Activated CD8-positive, alpha-beta memory T cell treated with anti-CD3 and anti-CD28 coated beads, Interleukin-2, amount 10 ng/mL, durations not matched to agents 7 days and 5 days (primary cell): ENCODE measurements at regions of chr20 and their contacts with region 1.

Region 1: GRCh38 chr20:62937366-62938104 is 412 bp upstream of the GID8 start:
- DNase-seq: peak; percentile 98
- ATAC-seq: peak; percentile 88
- H3K4me3 Mint-ChIP-seq: no peak overlapping the region
- H3K27ac Mint-ChIP-seq: peak overlapping the region; percentile 95
- H3K4me1 Mint-ChIP-seq: peaks cover 44% of the 10 kb centered on the region
- H3K27me3 Mint-ChIP-seq: no peaks in the 10 kb centered on the region

Region 2: DNA sequence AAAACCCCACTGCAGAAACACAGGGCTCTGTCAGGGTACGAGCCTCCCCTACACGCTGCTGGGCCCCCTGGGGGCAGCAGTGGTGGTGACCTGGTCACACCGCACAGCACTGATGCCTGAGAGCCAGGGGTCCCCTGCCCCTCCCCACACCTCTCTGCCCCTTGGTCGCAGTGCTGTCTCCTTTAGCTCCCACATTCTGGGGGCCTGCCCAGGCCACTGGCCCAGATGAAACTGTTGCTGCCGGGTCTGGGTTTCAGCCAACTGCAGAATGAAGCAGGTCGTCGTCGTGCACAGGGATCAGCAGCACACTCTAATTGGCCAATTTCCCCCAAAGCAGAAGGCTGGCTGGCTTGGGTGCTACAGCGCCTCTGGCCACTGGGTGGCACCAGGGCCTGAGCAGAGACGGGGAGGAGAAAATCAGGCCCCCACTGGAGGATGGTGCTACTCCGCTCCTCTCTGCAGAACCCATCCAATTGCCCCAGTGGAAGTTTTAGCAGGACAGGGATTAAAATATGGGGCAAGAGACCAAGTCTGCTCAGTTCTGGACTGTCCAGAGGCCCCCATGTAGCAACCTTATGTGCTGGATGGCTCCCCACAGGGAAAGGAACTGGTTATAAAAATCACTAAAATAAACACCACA is 37.4 kb before region 1 on chr20:
- CTCF ChIA-PET with region 1: interaction called, 10 read pairs
- DNase-seq: peak; percentile 88
- ATAC-seq: peak; percentile 93
- H3K4me3 Mint-ChIP-seq: peak overlapping the region; percentile 41
- H3K27ac Mint-ChIP-seq: peak overlapping the region; percentile 70
- H3K4me1 Mint-ChIP-seq: peaks cover 52% of the 10 kb centered on the region
- H3K27me3 Mint-ChIP-seq: no peaks in the 10 kb centered on the region

Region 3: DNA sequence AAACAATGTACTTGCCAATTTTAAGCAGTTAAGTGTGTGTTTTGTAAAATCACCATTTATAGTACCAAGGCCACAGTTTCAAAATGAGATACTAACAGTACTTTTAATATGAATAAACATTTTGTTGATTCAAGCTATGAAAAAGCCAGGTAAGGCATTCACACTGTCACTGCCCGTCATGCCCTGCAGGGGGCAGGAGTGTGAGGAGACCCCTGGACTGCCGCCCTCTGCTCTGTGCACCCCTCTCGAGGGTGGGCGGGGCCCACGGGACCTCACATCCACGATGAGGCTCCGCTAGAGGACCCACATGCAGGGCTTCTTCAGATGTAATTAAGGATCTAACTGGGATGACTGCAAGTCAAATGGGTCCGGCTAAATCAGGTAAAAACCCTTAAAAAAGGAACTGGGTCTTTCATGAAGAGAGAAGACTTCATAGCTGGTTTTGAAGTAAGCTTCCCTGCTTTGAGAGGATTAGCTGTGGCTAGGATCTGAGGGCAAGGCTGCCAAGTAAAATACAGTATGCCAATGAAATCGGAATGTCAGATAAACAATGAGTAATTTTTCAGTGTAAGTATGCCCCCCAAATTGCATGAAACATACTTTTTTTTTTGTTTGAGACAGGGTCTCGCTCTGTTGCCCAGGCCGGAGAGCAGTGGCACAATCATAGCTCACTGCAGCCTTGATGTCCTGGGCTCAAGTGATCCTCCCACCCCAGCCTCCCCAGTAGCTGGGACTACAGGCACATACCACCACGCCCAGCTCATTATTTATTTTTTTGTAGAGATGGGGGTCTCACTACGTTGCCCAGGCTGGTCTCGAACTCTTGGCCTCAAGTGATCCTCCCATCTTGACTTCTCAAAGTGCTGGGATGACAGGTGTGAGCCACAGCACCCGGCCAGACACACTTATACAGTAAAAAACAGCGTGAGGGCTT is 29.9 kb before region 1 on chr20:
- CTCF ChIA-PET with region 1: interaction called, 13 read pairs
- DNase-seq: no peak
- ATAC-seq: peak; percentile 65
- H3K4me3 Mint-ChIP-seq: no peak overlapping the region
- H3K27ac Mint-ChIP-seq: peak overlapping the region; percentile 57
- H3K4me1 Mint-ChIP-seq: peaks cover 49% of the 10 kb centered on the region
- H3K27me3 Mint-ChIP-seq: no peaks in the 10 kb centered on the region

Region 4: DNA sequence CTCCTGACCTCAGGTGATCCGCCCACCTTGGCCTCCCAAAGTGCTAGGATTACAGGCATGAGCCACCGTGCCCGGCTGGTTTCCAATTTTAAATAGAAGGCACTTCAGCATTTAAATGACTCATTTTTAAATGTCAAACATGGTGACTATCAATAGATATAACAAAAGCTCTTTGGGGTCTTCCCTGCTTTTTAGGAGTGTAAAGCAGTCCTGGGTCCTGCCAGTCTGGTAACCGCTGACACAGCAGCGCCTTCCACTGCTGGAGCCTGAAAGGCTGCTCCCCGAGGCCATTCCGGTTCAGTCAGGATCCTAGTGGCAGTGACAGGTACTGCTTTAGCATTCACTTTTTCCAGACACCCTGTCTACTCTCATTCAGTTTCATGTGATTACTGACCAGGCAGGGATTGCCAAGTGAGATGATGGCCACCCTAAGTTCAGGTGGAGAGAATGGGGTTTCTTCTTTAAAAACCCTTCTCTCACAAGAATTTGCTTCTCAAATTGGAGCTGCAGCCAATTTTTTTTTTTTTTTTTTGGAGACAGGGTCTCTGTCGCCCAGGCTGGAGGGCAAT is 16.3 kb before region 1 on chr20:
- CTCF ChIA-PET with region 1: interaction called, 53 read pairs
- DNase-seq: peak; percentile 82
- ATAC-seq: peak; percentile 57
- H3K4me3 Mint-ChIP-seq: peak overlapping the region; percentile 56
- H3K27ac Mint-ChIP-seq: peak overlapping the region; percentile 89
- H3K4me1 Mint-ChIP-seq: peaks cover 75% of the 10 kb centered on the region
- H3K27me3 Mint-ChIP-seq: no peaks in the 10 kb centered on the region

Region 5: GRCh38 chr20:62926239-62927104 is 11.1 kb before region 1 on chr20 and contains the start of gene DIDO1:
- CTCF ChIA-PET with region 1: interaction called, 53 read pairs
- DNase-seq: peak; percentile 92
- ATAC-seq: peak; percentile 75
- H3K4me3 Mint-ChIP-seq: peak within 1 kb of the TSS; percentile 88
- H3K27ac Mint-ChIP-seq: peak within 1 kb of the TSS; percentile 94
- H3K4me1 Mint-ChIP-seq: peaks cover 68% of the 10 kb centered on the region
- H3K27me3 Mint-ChIP-seq: no peaks in the 10 kb centered on the region
- total RNA-seq, gene DIDO1: 64.6 to 87.0 TPM

Region 6: GRCh38 chr20:62953839-62954703 is 16.5 kb after region 1 on chr20:
- CTCF ChIA-PET with region 1: interaction called, 30 read pairs
- DNase-seq: peak; percentile 90
- ATAC-seq: peak; percentile 81
- H3K4me3 Mint-ChIP-seq: peak overlapping the region; percentile 75
- H3K27ac Mint-ChIP-seq: peak overlapping the region; percentile 89
- H3K4me1 Mint-ChIP-seq: peaks cover 22% of the 10 kb centered on the region
- H3K27me3 Mint-ChIP-seq: no peaks in the 10 kb centered on the region